Heart right ventricle (tissue), 16 donors: ENCODE measurements at regions of chr10 and their contacts with region 1.

Region 1: DNA sequence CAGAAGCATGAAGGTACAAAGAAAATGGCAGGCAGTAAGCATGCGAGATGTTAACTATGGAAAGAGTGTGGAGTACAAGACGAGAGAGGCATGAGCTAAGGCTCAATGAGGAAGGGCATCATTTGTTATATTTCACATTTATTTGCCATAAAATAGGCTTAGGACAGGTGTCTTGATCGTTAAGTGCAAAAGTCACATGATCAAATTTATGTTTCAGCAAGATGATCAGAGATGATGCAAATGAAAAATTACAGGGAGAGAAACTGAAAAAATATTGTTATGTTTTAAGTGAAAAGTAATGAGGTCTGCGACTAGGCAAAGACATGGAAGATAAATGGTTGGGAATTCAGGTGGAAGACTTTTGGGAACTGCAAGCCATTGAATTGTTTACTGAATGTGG is 141.4 kb downstream of the NRG3 start:
- DNase-seq: no peak
- ATAC-seq: no peak
- H3K4me3 ChIP-seq: no peak overlapping the region
- H3K27ac ChIP-seq: no peak overlapping the region
- H3K4me1 ChIP-seq: no peaks in the 10 kb centered on the region
- H3K27me3 ChIP-seq: no peaks in the 10 kb centered on the region
- CTCF ChIP-seq: no peak

Region 2: GRCh38 chr10:81953420-81953819 is 63.0 kb before region 1 on chr10:
- intact Hi-C with region 1: no loop called
- DNase-seq: no peak
- ATAC-seq: no peak
- H3K4me3 ChIP-seq: no peak overlapping the region
- H3K27ac ChIP-seq: no peak overlapping the region
- H3K4me1 ChIP-seq: no peaks in the 10 kb centered on the region
- H3K27me3 ChIP-seq: no peaks in the 10 kb centered on the region
- CTCF ChIP-seq: no peak

Region 3: GRCh38 chr10:81981724-81982123 is 34.7 kb before region 1 on chr10:
- intact Hi-C with region 1: no loop called
- DNase-seq: no peak
- ATAC-seq: no peak
- H3K4me3 ChIP-seq: no peak overlapping the region
- H3K27ac ChIP-seq: no peak overlapping the region
- H3K4me1 ChIP-seq: no peaks in the 10 kb centered on the region
- H3K27me3 ChIP-seq: no peaks in the 10 kb centered on the region
- CTCF ChIP-seq: no peak

Region 4: GRCh38 chr10:82321724-82322123 is 305.3 kb after region 1 on chr10:
- intact Hi-C with region 1: loop called in 1 of 10 experiments (anchors 5 kb)
- DNase-seq: no peak
- ATAC-seq: no peak
- H3K4me3 ChIP-seq: no peak overlapping the region
- H3K27ac ChIP-seq: no peak overlapping the region
- H3K4me1 ChIP-seq: no peaks in the 10 kb centered on the region
- H3K27me3 ChIP-seq: no peaks in the 10 kb centered on the region
- CTCF ChIP-seq: no peak